ENCODE measurements at regions of chr1 and their contacts with region 1.

Region 1: GRCh38 chr1:119743781-119744597 is 24.7 kb downstream of the HMGCS2 start:
- DNase-seq: peak; percentile 71
- H3K4me3 ChIP-seq: no peak overlapping the region
- H3K27ac ChIP-seq: no peak overlapping the region
- H3K4me1 ChIP-seq: no peaks in the 10 kb centered on the region
- H3K27me3 ChIP-seq: no peaks in the 10 kb centered on the region
- CTCF ChIP-seq: peak; percentile 68

Region 2: DNA sequence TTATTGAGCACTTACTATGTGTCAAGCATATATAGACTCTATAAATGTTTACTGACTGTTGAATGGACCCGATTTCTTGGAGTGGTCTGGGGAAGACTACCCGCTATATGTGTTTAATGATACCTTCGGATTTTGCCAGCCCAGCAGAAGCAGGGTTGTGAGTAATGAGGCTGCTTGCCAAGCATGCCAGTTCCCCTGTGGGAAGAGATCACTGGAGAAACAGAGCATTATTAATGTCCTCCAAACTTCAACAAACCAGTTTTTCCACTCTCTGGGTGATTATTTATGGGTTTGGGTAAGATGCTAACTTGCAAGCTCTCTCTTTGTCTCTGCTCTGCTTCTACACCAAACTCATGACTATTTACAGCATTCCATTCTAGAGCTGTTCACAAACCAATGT is 57.3 kb before region 1 on chr1:
- intact Hi-C with region 1: no loop called
- DNase-seq: no peak
- H3K4me3 ChIP-seq: no peak overlapping the region
- H3K27ac ChIP-seq: no peak overlapping the region
- H3K4me1 ChIP-seq: no peaks in the 10 kb centered on the region
- H3K27me3 ChIP-seq: no peaks in the 10 kb centered on the region
- CTCF ChIP-seq: no peak

Region 3: DNA sequence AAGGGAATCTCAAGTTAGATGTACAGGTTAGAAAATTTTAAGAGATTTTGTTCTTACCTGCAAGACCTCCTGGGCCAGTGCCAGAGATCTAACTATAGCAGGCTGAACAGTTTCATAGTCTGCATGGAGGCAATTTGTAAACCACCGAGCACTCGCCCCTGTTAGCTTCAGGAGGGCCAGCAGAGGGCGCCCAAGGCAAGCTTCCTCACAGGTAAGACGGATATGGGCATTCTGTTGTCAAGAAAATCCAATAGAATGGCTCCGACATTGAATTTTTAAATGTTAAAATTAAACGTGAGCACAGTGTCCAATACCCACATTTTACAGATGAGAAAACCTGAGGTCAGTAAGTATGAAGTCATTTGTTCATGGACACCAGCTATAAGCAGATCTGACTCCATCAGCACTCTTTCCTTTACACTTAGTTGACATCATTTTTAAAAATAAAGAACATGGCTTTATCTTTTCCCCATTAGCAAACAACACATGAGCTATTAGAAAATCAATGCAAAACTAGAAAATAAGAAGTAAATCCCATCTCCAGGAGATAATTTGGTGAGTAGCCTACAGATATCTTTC is 65.1 kb after region 1 on chr1:
- intact Hi-C with region 1: loop called (anchors 5 kb)
- DNase-seq: peak; percentile 84
- H3K4me3 ChIP-seq: no peak overlapping the region
- H3K27ac ChIP-seq: no peak overlapping the region
- H3K4me1 ChIP-seq: no peaks in the 10 kb centered on the region
- H3K27me3 ChIP-seq: no peaks in the 10 kb centered on the region
- CTCF ChIP-seq: peak; percentile 92

Region 4: GRCh38 chr1:119885903-119886783 is 142.2 kb after region 1 on chr1:
- intact Hi-C with region 1: loop called (anchors 10 kb)
- DNase-seq: peak; percentile 68
- H3K4me3 ChIP-seq: no peak overlapping the region
- H3K27ac ChIP-seq: no peak overlapping the region
- H3K4me1 ChIP-seq: no peaks in the 10 kb centered on the region
- H3K27me3 ChIP-seq: no peaks in the 10 kb centered on the region
- CTCF ChIP-seq: peak; percentile 59

Region 5: GRCh38 chr1:119948342-119949214 is 204.6 kb after region 1 on chr1:
- intact Hi-C with region 1: loop called (anchors 10 kb)
- DNase-seq: peak; percentile 82
- H3K4me3 ChIP-seq: no peak overlapping the region
- H3K27ac ChIP-seq: no peak overlapping the region
- H3K4me1 ChIP-seq: no peaks in the 10 kb centered on the region
- H3K27me3 ChIP-seq: no peaks in the 10 kb centered on the region
- CTCF ChIP-seq: peak; percentile 80